Esophagus muscularis mucosa (tissue), 4 donors: ENCODE measurements at regions of chr7 and their contacts with region 1.

Region 1: GRCh38 chr7:135662373-135663114 is at the start of gene STMP1:
- DNase-seq: peak; percentile 98
- H3K4me3 ChIP-seq: peak within 1 kb of the TSS; percentile 78 to 99 (median 96)
- H3K27ac ChIP-seq: peak within 1 kb of the TSS; percentile 92 to 97 (median 94)
- H3K4me1 ChIP-seq: peaks cover 35 to 49% (median 40%) of the 10 kb centered on the region in 4 donors
- H3K27me3 ChIP-seq: no peaks in the 10 kb centered on the region
- CTCF ChIP-seq: peak in 2 of 3 experiments; percentile 88 to 90
- EP300 ChIP-seq: no peak
- POLR2A ChIP-seq: peak; percentile 93
- total RNA-seq, gene STMP1: 8.6 to 18.7 (median 9.7) TPM

Region 2: GRCh38 chr7:135977007-135977741 is 314.6 kb after region 1 on chr7 and contains the start of gene MTPN:
- intact Hi-C with region 1: loop called (anchors 5 kb)
- DNase-seq: peak; percentile 99
- H3K4me3 ChIP-seq: peak within 1 kb of the TSS; percentile 78 to 95 (median 84)
- H3K27ac ChIP-seq: peak within 1 kb of the TSS; percentile 81 to 89 (median 86)
- H3K4me1 ChIP-seq: peaks cover 37 to 56% (median 48%) of the 10 kb centered on the region in 4 donors
- H3K27me3 ChIP-seq: no peaks in the 10 kb centered on the region
- CTCF ChIP-seq: no peak
- EP300 ChIP-seq: no peak
- POLR2A ChIP-seq: no peak
- total RNA-seq, gene MTPN: 68.8 to 74.9 (median 71.5) TPM

Region 3: GRCh38 chr7:136009488-136010079 is 347.0 kb after region 1 on chr7:
- intact Hi-C with region 1: loop called (anchors 5 kb)
- DNase-seq: no peak
- H3K4me3 ChIP-seq: no peak overlapping the region
- H3K27ac ChIP-seq: no peak overlapping the region
- H3K4me1 ChIP-seq: peaks cover 0 to 5% (median 2%) of the 10 kb centered on the region in 4 donors
- H3K27me3 ChIP-seq: no peaks in the 10 kb centered on the region
- CTCF ChIP-seq: peak; percentile 70 to 74 (median 73)
- EP300 ChIP-seq: no peak
- POLR2A ChIP-seq: no peak